WTC11 (cell line): ENCODE measurements at regions of chr19 and their contacts with region 1.

Region 1: GRCh38 chr19:1929021-1929742 is 11.8 kb upstream of the CSNK1G2 start:
- DNase-seq: peak; percentile 94
- ATAC-seq: peak; percentile 88
- H3K4me3 Mint-ChIP-seq: peak overlapping the region; percentile 67
- H3K27ac Mint-ChIP-seq: no peak overlapping the region
- H3K4me1 Mint-ChIP-seq: no peaks in the 10 kb centered on the region
- H3K27me3 Mint-ChIP-seq: peaks cover 25% of the 10 kb centered on the region
- CTCF ChIP-seq: peak; percentile 85

Region 2: DNA sequence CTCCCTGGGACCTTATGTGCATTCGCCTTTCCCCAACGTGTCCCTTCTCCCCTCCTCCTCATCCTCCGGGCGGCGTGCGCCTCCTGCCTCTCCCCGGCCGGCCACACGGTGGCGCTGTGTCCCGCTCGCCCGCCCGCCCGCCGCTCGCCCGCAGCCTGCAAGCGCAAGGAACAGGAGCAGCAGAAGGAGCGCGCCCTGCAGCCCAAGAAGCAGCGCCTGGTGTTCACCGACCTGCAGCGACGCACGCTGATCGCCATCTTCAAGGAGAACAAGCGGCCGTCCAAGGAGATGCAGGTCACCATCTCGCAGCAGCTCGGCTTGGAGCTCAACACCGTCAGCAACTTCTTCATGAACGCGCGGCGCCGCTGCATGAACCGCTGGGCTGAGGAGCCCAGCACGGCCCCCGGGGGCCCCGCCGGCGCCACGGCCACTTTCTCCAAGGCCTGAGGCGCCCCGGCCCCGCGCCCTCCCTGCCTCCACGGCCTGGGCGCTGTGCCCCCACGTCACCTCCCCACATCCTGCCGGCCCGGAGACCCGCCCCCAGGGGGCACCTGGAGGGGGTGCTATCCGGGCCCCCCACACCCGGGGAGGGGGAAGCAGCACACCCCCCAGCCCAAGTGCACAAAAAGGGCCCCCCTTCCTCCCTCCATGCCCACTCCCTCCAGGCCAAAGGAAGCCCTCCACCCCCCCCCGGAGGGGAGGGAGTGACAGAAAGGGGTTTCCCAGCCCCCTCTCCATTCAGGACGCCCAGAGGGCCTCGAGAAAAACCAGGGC is 154.0 kb before region 1 on chr19:
- CTCF ChIA-PET with region 1: no interaction called
- POLR2A ChIA-PET with region 1: no interaction called
- DNase-seq: peak; percentile 72
- ATAC-seq: peak; percentile 85
- H3K4me3 Mint-ChIP-seq: peak overlapping the region; percentile 58
- H3K27ac Mint-ChIP-seq: no peak overlapping the region
- H3K4me1 Mint-ChIP-seq: peaks cover 16% of the 10 kb centered on the region
- H3K27me3 Mint-ChIP-seq: peaks cover 98% of the 10 kb centered on the region
- CTCF ChIP-seq: peak; percentile 98

Region 3: GRCh38 chr19:1896508-1896907 is 32.7 kb before region 1 on chr19:
- CTCF ChIA-PET with region 1: interaction called, 19 read pairs
- POLR2A ChIA-PET with region 1: no interaction called
- DNase-seq: no peak
- ATAC-seq: no peak
- H3K4me3 Mint-ChIP-seq: no peak overlapping the region
- H3K27ac Mint-ChIP-seq: no peak overlapping the region
- H3K4me1 Mint-ChIP-seq: peaks cover 7% of the 10 kb centered on the region
- H3K27me3 Mint-ChIP-seq: peaks cover 17% of the 10 kb centered on the region
- CTCF ChIP-seq: no peak

Region 4: GRCh38 chr19:1905071-1905862 is 23.9 kb before region 1 on chr19 and contains the starts of genes ADAT3 and SCAMP4:
- CTCF ChIA-PET with region 1: interaction called, 10 read pairs
- POLR2A ChIA-PET with region 1: interaction called, 3 read pairs
- DNase-seq: peak; percentile 100
- ATAC-seq: peak; percentile 96
- H3K4me3 Mint-ChIP-seq: peak within 1 kb of the TSS; percentile 80
- H3K27ac Mint-ChIP-seq: peak within 1 kb of the TSS; percentile 95
- H3K4me1 Mint-ChIP-seq: peaks cover 17% of the 10 kb centered on the region
- H3K27me3 Mint-ChIP-seq: no peaks in the 10 kb centered on the region
- CTCF ChIP-seq: no peak
- total RNA-seq, gene ADAT3: 15.0 to 20.3 TPM (median 15.9 TPM) in 3 replicates
- total RNA-seq, gene SCAMP4: 81.3 to 86.1 TPM (median 86.1 TPM) in 3 replicates

Region 5: GRCh38 chr19:1945899-1946298 is 16.7 kb after region 1 on chr19:
- CTCF ChIA-PET with region 1: interaction called, 18 read pairs
- POLR2A ChIA-PET with region 1: interaction called, 3 read pairs
- DNase-seq: peak; percentile 91
- ATAC-seq: peak; percentile 69
- H3K4me3 Mint-ChIP-seq: no peak overlapping the region
- H3K27ac Mint-ChIP-seq: peak overlapping the region; percentile 98
- H3K4me1 Mint-ChIP-seq: peaks cover 16% of the 10 kb centered on the region
- H3K27me3 Mint-ChIP-seq: no peaks in the 10 kb centered on the region
- CTCF ChIP-seq: peak; percentile 82

Region 6: DNA sequence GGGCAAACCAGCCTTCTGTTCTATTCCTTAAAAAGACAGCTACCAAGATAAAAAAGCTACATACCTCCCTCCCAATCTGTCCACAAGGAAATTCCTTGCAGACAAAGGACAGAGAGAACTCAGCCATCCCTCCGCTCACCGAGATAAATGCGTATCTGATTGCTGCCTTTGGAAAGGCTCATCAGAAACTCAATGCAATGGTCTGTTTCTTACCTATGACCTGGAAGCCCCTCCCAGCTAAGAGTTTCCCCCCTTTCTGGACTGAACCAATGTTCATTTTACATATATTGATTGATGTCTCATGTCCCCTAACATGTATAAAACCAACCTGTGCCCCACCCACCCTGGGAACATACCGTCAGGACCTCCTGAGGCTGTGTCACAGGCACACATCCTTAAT is 74.7 kb after region 1 on chr19:
- CTCF ChIA-PET with region 1: no interaction called
- POLR2A ChIA-PET with region 1: no interaction called
- DNase-seq: no peak
- ATAC-seq: no peak
- H3K4me3 Mint-ChIP-seq: no peak overlapping the region
- H3K27ac Mint-ChIP-seq: no peak overlapping the region
- H3K4me1 Mint-ChIP-seq: no peaks in the 10 kb centered on the region
- H3K27me3 Mint-ChIP-seq: peaks cover 20% of the 10 kb centered on the region
- CTCF ChIP-seq: no peak

Region 7: GRCh38 chr19:2027361-2027760 is 98.2 kb after region 1 on chr19:
- CTCF ChIA-PET with region 1: no interaction called
- POLR2A ChIA-PET with region 1: no interaction called
- DNase-seq: no peak
- ATAC-seq: no peak
- H3K4me3 Mint-ChIP-seq: no peak overlapping the region
- H3K27ac Mint-ChIP-seq: no peak overlapping the region
- H3K4me1 Mint-ChIP-seq: peaks cover 9% of the 10 kb centered on the region
- H3K27me3 Mint-ChIP-seq: peaks cover 13% of the 10 kb centered on the region
- CTCF ChIP-seq: no peak